ENCODE measurements at regions of chr2 and their contacts with region 1.

Region 1: DNA sequence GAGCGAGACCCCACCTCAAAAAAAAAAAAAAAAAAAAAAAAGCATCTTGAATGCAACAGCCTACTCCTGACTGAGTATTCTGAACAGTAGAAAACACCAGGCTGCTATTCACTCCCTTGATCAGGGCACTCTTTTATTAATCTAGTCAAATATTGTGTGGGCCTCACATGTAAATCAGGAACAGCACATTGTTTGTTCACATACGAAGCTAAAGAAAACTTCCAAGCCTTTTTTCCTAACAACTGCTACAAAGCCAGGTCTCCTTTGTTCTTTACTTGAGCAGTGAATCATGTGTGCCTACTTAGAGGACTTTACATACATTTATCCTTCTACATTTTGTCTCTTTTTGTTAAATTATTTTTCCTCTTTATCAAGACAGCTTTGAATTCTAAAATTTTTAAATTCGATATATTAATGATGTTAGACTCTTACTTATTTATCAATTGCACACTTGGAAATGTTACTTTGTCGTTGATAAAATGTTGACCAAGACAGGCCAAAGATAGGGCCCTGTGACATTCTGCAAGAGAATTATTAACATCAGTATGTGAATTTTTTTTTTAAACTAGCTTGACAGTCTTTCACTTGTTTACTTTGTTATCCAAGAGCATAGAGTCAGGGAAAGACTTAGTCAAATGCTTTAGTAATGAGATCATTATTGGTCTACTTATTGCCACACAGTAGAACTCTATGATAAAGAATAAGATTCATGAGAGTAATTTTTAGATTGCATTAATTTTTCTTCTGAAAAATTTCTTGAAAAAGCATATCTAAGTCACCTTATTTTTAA is 13.2 kb downstream of the SPATS2L start:
- DNase-seq: peak; percentile 92
- ATAC-seq: peak; percentile 67
- H3K4me3 ChIP-seq: peak overlapping the region in 2 of 3 experiments; percentile 4 to 12; a peak in 2 of 6 replicates
- H3K27ac ChIP-seq: peak overlapping the region; percentile 90
- H3K4me1 ChIP-seq: peaks cover 98% of the 10 kb centered on the region
- H3K27me3 ChIP-seq: no peaks in the 10 kb centered on the region
- CTCF ChIP-seq: no peak
- EP300 ChIP-seq: peak in 1 of 2 experiments; percentile 92; a peak in 2 of 4 replicates
- POLR2A ChIP-seq: no peak
- RAD21 ChIP-seq: no peak

Region 2: DNA sequence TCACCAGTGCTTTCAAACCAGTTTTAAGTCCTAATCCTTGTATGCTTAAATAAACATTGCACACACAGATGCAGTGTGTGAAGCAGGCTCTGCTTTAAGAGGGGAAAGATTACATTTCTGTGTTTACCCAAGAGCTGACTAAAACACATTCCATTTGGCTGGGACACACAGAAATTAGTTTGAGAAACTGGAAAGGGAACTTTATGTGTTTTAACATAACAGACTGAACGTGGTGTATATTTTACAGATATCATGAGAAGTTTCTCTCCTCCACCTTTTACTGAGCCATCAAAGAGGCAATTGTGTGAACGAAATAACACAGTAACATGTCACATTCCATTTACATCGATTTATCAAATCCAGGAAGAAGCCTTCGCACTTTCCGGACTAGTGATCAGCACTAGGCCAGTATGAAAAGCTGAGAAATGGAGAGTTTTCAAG is 242.5 kb before region 1 on chr2:
- CTCF ChIA-PET with region 1: no interaction called
- POLR2A ChIA-PET with region 1: no interaction called
- in situ Hi-C with region 1: no loop called
- intact Hi-C with region 1: loop called (anchors 1 kb)
- DNase-seq: peak; percentile 92
- ATAC-seq: peak; percentile 100
- H3K4me3 ChIP-seq: peak overlapping the region; percentile 30 to 54 (median 45); a peak in 4 of 6 replicates
- H3K27ac ChIP-seq: peak overlapping the region; percentile 68
- H3K4me1 ChIP-seq: peaks cover 24% of the 10 kb centered on the region
- H3K27me3 ChIP-seq: peaks cover 0 to 20% of the 10 kb centered on the region in 2 experiments; a peak in 3 of 5 replicates
- CTCF ChIP-seq: no peak
- EP300 ChIP-seq: peak in 1 of 2 experiments; percentile 89; a peak in 2 of 4 replicates
- POLR2A ChIP-seq: no peak
- RAD21 ChIP-seq: no peak

Region 3: GRCh38 chr2:200177971-200178911 is 141.5 kb before region 1 on chr2:
- CTCF ChIA-PET with region 1: no interaction called
- POLR2A ChIA-PET with region 1: no interaction called
- in situ Hi-C with region 1: no loop called
- intact Hi-C with region 1: no loop called
- DNase-seq: no peak
- ATAC-seq: no peak
- H3K4me3 ChIP-seq: no peak overlapping the region
- H3K27ac ChIP-seq: no peak overlapping the region
- H3K4me1 ChIP-seq: no peaks in the 10 kb centered on the region
- H3K27me3 ChIP-seq: peaks cover 0 to 40% of the 10 kb centered on the region in 2 experiments; a peak in 2 of 5 replicates
- CTCF ChIP-seq: no peak
- EP300 ChIP-seq: no peak
- POLR2A ChIP-seq: no peak
- RAD21 ChIP-seq: no peak

Region 4: GRCh38 chr2:200352636-200353035 is 32.9 kb after region 1 on chr2:
- CTCF ChIA-PET with region 1: no interaction called
- POLR2A ChIA-PET with region 1: interaction called, 5 read pairs
- in situ Hi-C with region 1: no loop called
- intact Hi-C with region 1: loop called (anchors 5 kb)
- DNase-seq: peak; percentile 60
- ATAC-seq: peak; percentile 29
- H3K4me3 ChIP-seq: no peak overlapping the region
- H3K27ac ChIP-seq: peak overlapping the region; percentile 23
- H3K4me1 ChIP-seq: peaks cover 53% of the 10 kb centered on the region
- H3K27me3 ChIP-seq: no peaks in the 10 kb centered on the region
- CTCF ChIP-seq: no peak
- EP300 ChIP-seq: no peak
- POLR2A ChIP-seq: no peak
- RAD21 ChIP-seq: no peak

Region 5: GRCh38 chr2:200367199-200367598 is 47.5 kb after region 1 on chr2:
- CTCF ChIA-PET with region 1: no interaction called
- POLR2A ChIA-PET with region 1: no interaction called
- in situ Hi-C with region 1: no loop called
- intact Hi-C with region 1: loop called (anchors 1 kb)
- DNase-seq: peak; percentile 91
- ATAC-seq: peak; percentile 56
- H3K4me3 ChIP-seq: no peak overlapping the region
- H3K27ac ChIP-seq: peak overlapping the region; percentile 47
- H3K4me1 ChIP-seq: peaks cover 73% of the 10 kb centered on the region
- H3K27me3 ChIP-seq: no peaks in the 10 kb centered on the region
- CTCF ChIP-seq: no peak
- EP300 ChIP-seq: peak in 1 of 2 experiments; percentile 99; a peak in 2 of 4 replicates
- POLR2A ChIP-seq: no peak
- RAD21 ChIP-seq: no peak